PC-9 (cell line): ENCODE measurements at regions of chr3 and their contacts with region 1.

Region 1: DNA sequence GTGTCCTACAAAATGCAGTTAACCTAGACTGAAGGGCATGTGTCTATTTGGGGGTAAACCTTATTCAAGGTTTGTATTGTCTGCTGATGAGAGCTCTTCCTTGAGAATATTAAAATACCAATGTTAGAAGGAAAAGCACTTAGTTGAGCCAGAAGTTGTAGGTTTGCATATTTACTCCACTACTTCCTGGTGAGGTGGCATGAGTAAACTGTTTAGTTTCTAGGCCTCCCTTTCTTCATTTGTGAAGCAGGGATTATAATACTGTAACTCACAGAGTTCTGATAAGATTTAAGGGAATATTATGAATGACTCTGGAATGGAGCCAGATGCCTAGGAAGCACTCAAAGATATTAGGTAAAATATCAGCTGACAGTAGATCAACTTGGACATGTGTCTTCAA is 46.7 kb downstream of the CD200R1L start:
- DNase-seq: peak; percentile 8 to 80
- H3K4me3 ChIP-seq: no peak overlapping the region
- H3K27ac ChIP-seq: peak overlapping the region; percentile 88
- H3K4me1 ChIP-seq: peaks cover 46% of the 10 kb centered on the region
- H3K27me3 ChIP-seq: no peaks in the 10 kb centered on the region
- CTCF ChIP-seq: no peak

Region 2: GRCh38 chr3:112670824-112671223 is 129.1 kb before region 1 on chr3:
- CTCF ChIA-PET with region 1: interaction called, 5 read pairs
- POLR2A ChIA-PET with region 1: interaction called, 16 read pairs
- intact Hi-C with region 1: no loop called
- DNase-seq: no peak
- H3K4me3 ChIP-seq: no peak overlapping the region
- H3K27ac ChIP-seq: peak overlapping the region; percentile 93
- H3K4me1 ChIP-seq: peaks cover 49% of the 10 kb centered on the region
- H3K27me3 ChIP-seq: no peaks in the 10 kb centered on the region
- CTCF ChIP-seq: no peak

Region 3: GRCh38 chr3:112718516-112718915 is 81.4 kb before region 1 on chr3:
- CTCF ChIA-PET with region 1: no interaction called
- POLR2A ChIA-PET with region 1: no interaction called
- intact Hi-C with region 1: no loop called
- DNase-seq: no peak
- H3K4me3 ChIP-seq: no peak overlapping the region
- H3K27ac ChIP-seq: no peak overlapping the region
- H3K4me1 ChIP-seq: no peaks in the 10 kb centered on the region
- H3K27me3 ChIP-seq: no peaks in the 10 kb centered on the region
- CTCF ChIP-seq: no peak

Region 4: DNA sequence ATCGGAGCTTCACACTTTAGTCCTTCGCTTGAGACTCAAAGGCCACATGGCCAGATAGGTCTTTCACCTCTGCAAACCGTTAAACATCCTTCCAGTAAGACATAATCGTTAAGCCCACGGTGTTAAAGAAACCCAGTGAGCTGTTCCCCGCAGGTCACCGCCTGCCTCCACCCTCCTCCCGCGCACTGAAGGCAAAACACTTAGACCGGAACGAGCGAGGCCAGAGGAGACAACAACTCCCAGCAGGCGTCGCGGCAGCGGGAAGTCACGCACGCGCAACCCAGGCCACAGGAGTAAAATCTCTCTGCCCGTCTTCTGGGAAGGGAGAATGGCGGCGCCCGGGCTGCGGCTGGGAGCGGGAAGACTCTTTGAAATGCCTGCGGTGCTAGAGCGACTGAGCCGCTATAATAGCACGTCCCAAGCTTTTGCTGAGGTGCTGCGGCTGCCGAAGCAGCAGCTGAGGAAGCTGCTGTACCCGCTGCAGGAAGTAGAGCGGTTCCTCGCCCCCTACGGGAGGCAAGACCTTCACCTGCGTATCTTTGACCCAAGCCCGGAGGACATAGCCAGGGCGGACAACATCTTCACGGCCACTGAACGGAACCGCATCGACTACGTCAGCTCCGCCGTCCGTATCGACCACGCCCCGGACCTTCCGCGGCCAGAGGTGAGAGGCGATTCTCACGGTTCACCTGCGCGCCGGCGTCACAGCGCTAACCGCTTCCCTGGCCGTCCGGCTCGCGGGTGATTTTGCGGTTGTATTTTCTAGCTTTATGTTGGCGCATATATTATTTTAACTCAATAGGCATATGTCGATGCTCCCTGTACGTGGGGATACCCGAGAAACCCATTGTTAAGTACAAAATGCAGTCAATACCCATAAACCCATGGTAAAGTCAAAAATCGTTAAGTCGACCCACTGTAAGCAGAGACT is 191.0 kb after region 1 on chr3 and contains the start of gene GTPBP8:
- CTCF ChIA-PET with region 1: no interaction called
- POLR2A ChIA-PET with region 1: no interaction called
- intact Hi-C with region 1: no loop called
- DNase-seq: peak; percentile 87 to 90
- H3K4me3 ChIP-seq: peak within 1 kb of the TSS; percentile 95
- H3K27ac ChIP-seq: peak within 1 kb of the TSS; percentile 98
- H3K4me1 ChIP-seq: peaks cover 29% of the 10 kb centered on the region
- H3K27me3 ChIP-seq: no peaks in the 10 kb centered on the region
- CTCF ChIP-seq: peak; percentile 25; the same call in 1 of the 2 replicates
- total RNA-seq, gene GTPBP8: 27.9 and 34.3 TPM in 2 replicates